PC-3 (cell line): ENCODE measurements at regions of chr4 and their contacts with region 1.

Region 1: DNA sequence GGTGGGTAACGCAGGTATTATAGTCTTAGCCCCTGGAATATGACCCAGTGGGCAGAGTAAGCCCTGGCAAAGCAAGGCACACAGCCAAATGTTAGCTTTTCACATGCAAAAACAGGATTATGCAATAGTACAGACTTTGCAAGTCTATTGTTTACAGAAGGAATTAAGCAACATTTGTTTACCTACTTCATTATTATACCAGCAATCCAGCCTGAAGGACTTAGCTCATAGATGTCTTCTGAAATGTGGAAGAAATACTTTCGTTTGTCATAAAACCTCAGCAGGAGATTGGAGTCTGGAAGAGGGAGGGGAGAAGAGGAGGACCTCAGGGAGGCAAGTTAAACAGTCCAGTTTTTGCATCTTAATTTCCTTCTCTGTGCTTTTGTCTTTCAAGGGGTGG is 226.7 kb upstream of the CENPE start:
- DNase-seq: peak; percentile 74
- ATAC-seq: peak; percentile 65
- H3K4me3 ChIP-seq: no peak overlapping the region
- H3K27ac ChIP-seq: 0 out of 2 replicates have a peak overlapping the region, but pooled peaks have one; percentile 30
- H3K4me1 ChIP-seq: peaks cover 29% of the 10 kb centered on the region
- H3K27me3 ChIP-seq: no peaks in the 10 kb centered on the region
- CTCF ChIP-seq: no peak

Region 2: DNA sequence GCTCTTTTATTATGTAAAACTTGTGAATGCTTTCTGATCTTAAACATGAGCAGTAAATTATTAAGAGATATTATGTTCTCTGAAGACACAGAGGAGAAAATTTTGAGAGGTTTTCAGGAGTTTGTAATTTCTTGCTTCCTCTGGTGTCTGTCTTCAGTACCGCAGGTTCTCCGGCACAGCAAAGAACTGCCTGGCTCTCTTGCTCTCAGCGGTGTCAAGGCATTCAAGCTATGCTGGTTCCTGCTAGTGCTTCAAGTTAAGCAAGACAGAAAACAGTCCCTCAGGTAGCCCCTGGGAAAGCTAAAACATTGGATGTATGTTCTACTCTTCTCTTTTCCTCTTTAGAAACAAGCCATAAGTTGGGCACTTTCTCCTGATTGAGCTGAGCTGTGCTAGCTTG is 106.5 kb before region 1 on chr4:
- CTCF ChIA-PET with region 1: no interaction called
- POLR2A ChIA-PET with region 1: interaction called, 10 read pairs
- intact Hi-C with region 1: no loop called
- DNase-seq: no peak
- ATAC-seq: no peak
- H3K4me3 ChIP-seq: no peak overlapping the region
- H3K27ac ChIP-seq: no peak overlapping the region
- H3K4me1 ChIP-seq: no peaks in the 10 kb centered on the region
- H3K27me3 ChIP-seq: no peaks in the 10 kb centered on the region
- CTCF ChIP-seq: no peak